Mammary epithelial cell (primary cell): ENCODE measurements at regions of chr12 and their contacts with region 1.

Region 1: DNA sequence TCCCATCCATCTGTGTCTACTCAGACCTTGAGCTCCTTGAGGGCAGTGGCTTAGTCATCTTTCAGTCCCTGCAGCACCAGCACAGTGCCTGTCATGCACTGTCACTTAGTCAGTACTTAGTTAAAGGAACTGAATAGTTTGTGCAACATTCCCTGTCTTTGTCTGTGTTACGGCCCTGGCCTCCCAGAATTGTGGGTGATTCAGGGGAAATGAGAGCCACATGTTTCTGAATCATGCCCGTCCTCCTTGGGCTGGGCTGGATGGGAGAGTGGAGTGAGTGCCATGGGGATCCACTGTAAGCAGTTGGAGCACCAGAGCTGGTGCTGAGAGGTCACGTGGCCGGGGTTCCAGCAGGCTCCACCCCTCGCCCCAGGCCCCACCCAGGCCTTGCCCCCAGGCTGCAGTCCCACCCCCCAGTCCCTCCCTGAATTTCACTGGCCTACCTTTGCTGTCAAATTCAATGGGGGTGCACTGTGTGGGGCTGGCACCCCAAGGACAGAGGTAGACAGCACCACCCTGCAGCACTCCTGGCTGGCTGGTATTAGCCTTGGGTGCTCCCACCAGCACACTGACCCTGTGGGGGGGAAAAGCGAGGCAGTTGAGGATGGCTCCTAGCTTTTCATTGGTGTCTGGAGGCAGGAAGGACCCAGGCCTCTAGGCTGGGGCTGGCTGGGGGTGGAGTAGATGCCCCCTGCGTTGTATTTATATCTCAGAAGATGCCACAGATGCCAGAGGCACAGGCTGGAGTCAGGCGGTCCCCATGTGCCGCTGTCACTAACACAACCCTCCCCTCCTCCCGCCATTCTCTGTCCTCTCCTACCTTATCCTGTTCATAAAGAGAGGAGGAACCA is 7.5 kb downstream of the ITGA5 start:
- DNase-seq: peak; percentile 99
- H3K4me3 ChIP-seq: no peak overlapping the region
- H3K27ac ChIP-seq: peak overlapping the region; percentile 74
- H3K4me1 ChIP-seq: peaks cover 46% of the 10 kb centered on the region
- H3K27me3 ChIP-seq: no peaks in the 10 kb centered on the region
- CTCF ChIP-seq: no peak

Region 2: DNA sequence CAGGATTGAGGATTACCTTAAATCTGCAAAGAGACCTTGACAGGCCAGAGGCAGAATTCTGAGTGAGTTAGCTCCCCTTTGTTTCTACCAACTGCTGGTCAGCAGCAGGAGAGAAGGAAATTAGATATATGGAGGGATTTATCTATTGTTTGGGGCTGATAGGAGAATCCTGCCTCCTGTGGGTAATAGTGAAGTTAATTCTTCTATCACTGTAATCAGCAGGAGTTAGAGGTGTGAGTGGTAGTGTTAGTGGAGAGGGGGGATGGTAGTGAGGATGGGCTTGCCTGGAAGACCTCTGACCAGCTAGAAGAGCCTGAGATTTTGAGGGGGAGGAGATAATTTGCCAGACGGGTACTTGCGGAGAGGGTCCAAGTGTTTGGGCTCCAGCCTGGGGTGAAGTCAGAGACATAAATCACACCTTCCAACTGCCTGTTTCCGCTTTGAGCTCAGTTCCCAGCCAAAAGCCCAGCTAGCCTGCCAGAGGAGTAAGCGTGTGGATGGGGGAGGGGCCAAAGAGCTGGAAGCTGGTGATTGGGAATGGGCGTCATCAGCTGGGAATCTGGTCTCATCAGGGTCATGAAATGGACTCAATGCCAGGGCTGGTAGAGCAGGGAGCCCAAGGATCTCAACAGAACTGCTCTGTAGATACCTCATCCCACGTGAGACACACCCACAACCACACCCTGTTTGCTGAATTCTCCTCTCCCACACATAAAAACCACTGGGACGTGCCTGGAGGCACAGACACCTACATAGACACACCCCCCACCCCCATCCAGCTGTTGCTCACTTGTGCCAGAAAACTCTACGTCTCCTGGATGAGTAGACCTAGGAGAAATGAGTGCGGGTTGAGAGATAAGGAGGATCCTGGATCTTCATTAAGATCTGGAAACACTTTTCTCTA is 20.5 kb after region 1 on chr12:
- CTCF ChIA-PET with region 1: interaction called, 7 read pairs
- dilution Hi-C with region 1: no loop called
- in situ Hi-C with region 1: no loop called
- intact Hi-C with region 1: loop called (anchors 1 kb)
- DNase-seq: peak; percentile 99
- H3K4me3 ChIP-seq: no peak overlapping the region
- H3K27ac ChIP-seq: peak overlapping the region; percentile 72
- H3K4me1 ChIP-seq: peaks cover 47% of the 10 kb centered on the region
- H3K27me3 ChIP-seq: no peaks in the 10 kb centered on the region
- CTCF ChIP-seq: no peak